KBM-7 (cell line): ENCODE measurements at regions of chr5 and their contacts with region 1.

Region 1: GRCh38 chr5:54217826-54218503 is 92.4 kb downstream of the ARL15 start:
- DNase-seq: peak; percentile 88

Region 2: GRCh38 chr5:53481887-53482716 is 735.9 kb before region 1 on chr5:
- in situ Hi-C with region 1: loop called (anchors 25 kb)
- DNase-seq: peak; percentile 78